ENCODE measurements at regions of chr3 and their contacts with region 1.

Region 1: GRCh38 chr3:179272385-179272784 is 21.5 kb upstream of the KCNMB3 start:
- DNase-seq: no peak
- CTCF ChIP-seq: no peak

Region 2: GRCh38 chr3:179260949-179261765 is 11.2 kb before region 1 on chr3:
- CTCF ChIA-PET with region 1: interaction called, 10 read pairs
- POLR2A ChIA-PET with region 1: no interaction called
- DNase-seq: peak; percentile 88
- CTCF ChIP-seq: no peak